BJ (cell line): ENCODE measurements at regions of chr2 and their contacts with region 1.

Region 1: GRCh38 chr2:171811245-171811628 is 82.8 kb downstream of the SLC25A12 start:
- DNase-seq: no peak
- H3K4me3 ChIP-seq: no peak overlapping the region
- H3K27me3 ChIP-seq: no peaks in the 10 kb centered on the region
- CTCF ChIP-seq: peak; percentile 41

Region 2: DNA sequence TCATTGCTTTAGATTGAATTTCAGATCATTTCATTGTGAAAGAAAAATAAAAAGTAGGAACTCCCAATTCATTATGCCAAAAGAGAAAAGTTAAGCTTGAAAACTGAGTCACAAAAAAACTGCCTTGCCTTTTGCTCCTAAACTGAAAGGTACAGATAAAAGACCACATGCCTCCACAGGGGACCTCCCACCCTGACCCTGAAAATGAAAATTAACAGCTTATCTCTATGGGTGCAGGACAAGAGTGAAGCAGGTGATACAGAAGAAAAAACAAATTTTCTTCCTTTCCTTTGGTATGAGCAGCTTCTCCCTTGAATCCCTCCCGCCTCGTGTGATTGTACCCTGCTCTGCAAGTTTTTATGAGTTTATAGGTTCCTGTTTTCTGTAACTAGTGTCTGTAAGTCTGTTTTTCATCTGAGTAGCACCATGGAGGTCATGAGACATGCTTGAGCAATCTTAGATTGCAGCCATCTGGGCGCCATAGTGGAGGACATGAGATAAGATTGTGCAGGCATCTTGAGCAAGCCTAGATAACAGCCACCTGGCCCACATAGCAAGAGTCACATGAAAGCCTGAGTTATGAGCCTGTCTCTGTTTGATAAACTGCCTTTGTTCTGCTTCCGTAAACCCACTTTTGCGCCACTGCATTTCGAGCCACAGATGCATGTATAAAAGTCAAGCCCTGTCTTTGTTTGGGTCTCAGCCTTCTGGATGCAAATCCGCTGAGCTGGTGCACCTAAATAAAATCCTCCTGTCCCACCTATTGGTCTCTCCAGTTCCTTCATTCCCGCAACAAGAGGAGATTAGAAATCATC is 180.2 kb before region 1 on chr2:
- CTCF ChIA-PET with region 1: no interaction called
- POLR2A ChIA-PET with region 1: no interaction called
- DNase-seq: no peak
- H3K4me3 ChIP-seq: no peak overlapping the region
- H3K27me3 ChIP-seq: peaks cover 7% of the 10 kb centered on the region
- CTCF ChIP-seq: no peak

Region 3: GRCh38 chr2:171824086-171824485 is 12.8 kb after region 1 on chr2:
- CTCF ChIA-PET with region 1: interaction called, 3 read pairs
- POLR2A ChIA-PET with region 1: interaction called, 27 read pairs
- DNase-seq: no peak
- H3K4me3 ChIP-seq: no peak overlapping the region
- H3K27me3 ChIP-seq: no peaks in the 10 kb centered on the region
- CTCF ChIP-seq: no peak

Region 4: GRCh38 chr2:171910494-171910893 is 99.3 kb after region 1 on chr2:
- CTCF ChIA-PET with region 1: no interaction called
- POLR2A ChIA-PET with region 1: no interaction called
- DNase-seq: no peak
- H3K4me3 ChIP-seq: no peak overlapping the region
- H3K27me3 ChIP-seq: no peaks in the 10 kb centered on the region
- CTCF ChIP-seq: no peak

Region 5: DNA sequence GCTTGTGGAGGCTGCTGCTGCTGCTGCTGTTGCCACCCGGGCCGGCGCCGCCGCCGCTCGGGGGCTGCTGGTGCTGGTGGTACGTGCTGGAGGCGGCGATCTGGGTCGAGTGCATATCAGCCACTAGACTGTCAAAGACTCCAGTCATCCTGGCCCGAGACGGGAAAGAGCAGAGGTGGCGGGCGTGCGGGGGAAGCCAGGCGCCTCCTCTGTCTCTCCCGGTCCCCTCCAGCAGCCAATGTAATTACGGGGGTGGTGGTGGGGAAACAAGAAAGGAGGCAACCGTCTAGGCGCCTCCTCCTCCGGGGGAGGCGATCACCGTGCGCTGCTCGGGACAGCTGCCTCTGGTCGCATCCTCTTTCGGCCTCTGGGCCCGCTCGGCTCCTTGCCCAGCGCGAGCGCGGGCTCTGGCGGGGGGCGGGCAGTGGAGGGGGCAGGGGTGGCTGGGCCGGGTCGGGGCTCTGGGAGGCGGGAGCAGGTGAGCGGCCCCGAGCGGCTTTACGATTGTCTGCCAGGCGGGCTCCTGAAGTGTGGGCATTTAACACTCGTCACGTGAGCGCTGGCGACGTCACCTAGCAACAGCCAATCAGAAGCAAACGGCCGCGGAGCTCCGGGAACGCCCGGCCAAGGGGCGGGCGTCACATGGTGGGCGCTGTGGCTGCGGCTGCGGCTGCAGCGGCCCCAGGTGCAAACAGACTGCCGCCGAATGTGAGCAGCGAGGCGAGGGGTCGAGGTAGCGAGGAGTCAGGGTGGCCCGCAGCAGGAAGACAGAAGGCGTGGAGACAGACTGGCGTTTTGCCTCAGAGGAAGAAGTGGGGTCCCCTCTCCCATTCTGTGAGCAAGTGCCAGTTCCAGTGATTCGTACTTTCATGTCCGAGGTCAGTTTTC is 291.4 kb after region 1 on chr2 and contains the start of gene DLX2:
- CTCF ChIA-PET with region 1: interaction called, 59 read pairs
- POLR2A ChIA-PET with region 1: no interaction called
- DNase-seq: no peak
- H3K4me3 ChIP-seq: peak within 1 kb of the TSS; percentile 49
- H3K27me3 ChIP-seq: no peaks in the 10 kb centered on the region
- CTCF ChIP-seq: no peak
- polyA plus RNA-seq, gene DLX2: 0.16 and 0.20 TPM in 2 replicates